Endothelial cell of umbilical vein (primary cell): ENCODE measurements at regions of chr18 and their contacts with region 1.

Region 1: GRCh38 chr18:3771121-3771971 is 321.4 kb downstream of the TGIF1 start:
- DNase-seq: peak; percentile 93
- H3K4me3 ChIP-seq: peak overlapping the region in 2 of 3 experiments; percentile 35 to 53
- H3K27ac ChIP-seq: peak overlapping the region; percentile 37
- H3K4me1 ChIP-seq: peaks cover 40% of the 10 kb centered on the region
- H3K27me3 ChIP-seq: no peaks in the 10 kb centered on the region
- CTCF ChIP-seq: peak; percentile 93 to 94
- POLR2A ChIP-seq: no peak

Region 2: DNA sequence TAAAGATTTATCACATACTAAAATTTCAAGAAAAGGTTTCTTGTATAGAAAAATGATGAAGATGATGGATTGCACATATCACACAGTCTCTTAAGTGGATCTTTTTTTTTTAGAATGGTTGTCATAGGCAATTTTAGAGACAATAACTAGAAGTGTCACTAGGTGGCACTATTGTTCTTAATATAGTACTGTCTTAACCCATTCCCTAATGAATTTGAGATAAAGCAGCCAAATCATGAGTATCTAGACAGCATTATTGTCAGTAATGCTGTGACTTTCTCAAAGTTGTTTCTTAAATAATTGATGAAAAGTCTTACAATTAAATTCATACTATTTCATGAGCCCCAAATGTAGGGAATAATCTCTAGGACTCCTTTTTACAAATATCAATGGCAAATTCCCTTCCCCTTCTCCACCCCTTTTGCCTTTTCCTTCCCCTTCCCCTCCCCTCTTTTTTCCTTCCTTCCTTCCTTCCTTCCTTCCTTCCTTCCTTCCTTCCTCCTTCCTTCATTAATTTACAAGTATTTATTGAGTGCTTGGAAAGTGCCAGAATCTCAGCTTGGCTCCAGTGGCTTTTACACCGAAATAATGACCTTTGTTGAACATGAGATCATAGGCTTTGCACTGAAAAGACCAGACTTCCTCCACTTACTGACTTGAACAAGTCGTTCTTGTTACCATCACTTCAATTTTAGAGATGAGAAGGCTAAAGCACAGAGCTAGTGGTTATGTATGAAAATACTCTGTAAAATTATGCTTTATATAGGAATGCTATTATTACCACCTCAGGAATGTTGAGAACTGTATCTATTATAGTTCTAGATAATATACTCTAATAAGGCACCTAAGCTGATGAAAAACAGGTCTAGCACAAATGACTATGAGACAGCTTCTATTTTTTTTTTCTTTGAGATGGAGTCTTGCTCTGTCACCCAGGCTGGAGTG is 489.6 kb before region 1 on chr18:
- CTCF ChIA-PET with region 1: interaction called, 4 read pairs
- POLR2A ChIA-PET with region 1: no interaction called
- dilution Hi-C with region 1: no loop called
- intact Hi-C with region 1: loop called (anchors 1 kb)
- DNase-seq: peak; percentile 91
- H3K4me3 ChIP-seq: no peak overlapping the region
- H3K27ac ChIP-seq: peak overlapping the region; percentile 84
- H3K4me1 ChIP-seq: peaks cover 38% of the 10 kb centered on the region
- H3K27me3 ChIP-seq: no peaks in the 10 kb centered on the region
- CTCF ChIP-seq: peak; percentile 6 to 21
- POLR2A ChIP-seq: no peak

Region 3: DNA sequence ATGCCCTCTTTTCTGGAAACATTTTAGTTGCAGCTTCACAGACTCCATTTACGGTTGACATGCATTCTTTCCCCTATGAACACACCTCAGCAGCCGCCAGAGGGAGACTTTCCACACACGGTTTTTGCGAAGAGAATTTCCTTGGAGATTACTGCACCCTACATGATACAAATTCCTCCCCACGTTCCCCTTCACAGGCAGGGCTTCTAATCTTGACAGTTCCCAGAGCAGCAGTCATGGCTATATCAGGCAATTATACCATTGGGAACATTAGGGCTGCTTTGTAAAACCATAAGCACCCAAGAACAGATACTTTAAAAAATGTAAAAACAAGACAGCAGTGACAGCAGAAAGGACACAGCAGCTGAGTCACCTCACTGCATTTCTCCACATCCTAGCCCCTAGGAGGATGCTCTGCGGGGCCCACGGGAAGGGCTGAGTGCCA is 67.6 kb before region 1 on chr18:
- CTCF ChIA-PET with region 1: interaction called, 88 read pairs
- POLR2A ChIA-PET with region 1: no interaction called
- dilution Hi-C with region 1: no loop called
- intact Hi-C with region 1: loop called (anchors 1 kb)
- DNase-seq: peak; percentile 65
- H3K4me3 ChIP-seq: no peak overlapping the region
- H3K27ac ChIP-seq: no peak overlapping the region
- H3K4me1 ChIP-seq: peaks cover 2% of the 10 kb centered on the region
- H3K27me3 ChIP-seq: no peaks in the 10 kb centered on the region
- CTCF ChIP-seq: peak; percentile 65 to 70
- POLR2A ChIP-seq: no peak

Region 4: DNA sequence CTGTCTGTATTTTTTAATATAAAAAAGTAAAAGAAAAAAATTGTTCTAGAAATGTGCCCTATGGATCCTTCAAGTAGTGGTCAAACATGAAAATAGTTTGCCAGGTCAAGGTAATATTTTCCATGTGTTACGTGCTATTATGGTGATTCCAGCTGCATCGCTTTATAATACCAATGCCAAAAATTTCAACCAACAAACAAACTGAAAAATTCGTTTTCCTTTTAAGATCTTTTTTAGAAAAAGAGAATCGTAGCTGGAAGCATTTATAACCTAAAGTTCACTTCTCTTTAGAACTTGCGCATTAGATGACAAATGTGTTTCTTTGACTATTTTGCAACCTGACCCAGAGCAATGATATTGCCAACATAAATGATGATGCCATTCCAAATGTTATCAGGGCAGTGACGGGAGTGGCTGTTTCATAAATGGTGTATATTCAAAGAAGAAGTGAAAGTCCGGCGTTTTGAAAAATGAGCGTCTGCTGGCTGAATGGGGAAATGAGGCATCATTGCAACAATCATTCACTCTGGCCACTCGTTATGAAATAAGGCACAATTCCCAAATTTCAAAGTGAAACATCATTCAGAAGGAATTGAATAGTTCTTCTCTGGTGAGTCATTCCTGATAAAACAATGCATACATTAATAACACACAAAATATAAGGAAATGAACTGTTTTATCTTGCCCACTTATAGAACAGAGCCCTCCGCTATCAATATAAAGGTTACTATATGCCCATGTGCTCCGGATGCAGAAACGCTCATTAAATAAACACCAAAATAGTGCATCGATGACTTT is 24.0 kb before region 1 on chr18:
- CTCF ChIA-PET with region 1: interaction called, 6 read pairs
- POLR2A ChIA-PET with region 1: interaction called, 5 read pairs
- dilution Hi-C with region 1: no loop called
- intact Hi-C with region 1: loop called (anchors 1 kb)
- DNase-seq: peak; percentile 90
- H3K4me3 ChIP-seq: peak overlapping the region in 2 of 3 experiments; percentile 4 to 44
- H3K27ac ChIP-seq: peak overlapping the region; percentile 87
- H3K4me1 ChIP-seq: peaks cover 25% of the 10 kb centered on the region
- H3K27me3 ChIP-seq: no peaks in the 10 kb centered on the region
- CTCF ChIP-seq: no peak
- POLR2A ChIP-seq: no peak

Region 5: GRCh38 chr18:3789525-3789924 is 18.2 kb after region 1 on chr18:
- CTCF ChIA-PET with region 1: interaction called, 84 read pairs
- POLR2A ChIA-PET with region 1: interaction called, 8 read pairs
- dilution Hi-C with region 1: no loop called
- intact Hi-C with region 1: loop called (anchors 1 kb)
- DNase-seq: no peak
- H3K4me3 ChIP-seq: no peak overlapping the region
- H3K27ac ChIP-seq: no peak overlapping the region
- H3K4me1 ChIP-seq: peaks cover 25% of the 10 kb centered on the region
- H3K27me3 ChIP-seq: no peaks in the 10 kb centered on the region
- CTCF ChIP-seq: no peak
- POLR2A ChIP-seq: no peak

Region 6: GRCh38 chr18:3816610-3817363 is 45.4 kb after region 1 on chr18:
- CTCF ChIA-PET with region 1: interaction called, 12 read pairs
- POLR2A ChIA-PET with region 1: no interaction called
- dilution Hi-C with region 1: no loop called
- intact Hi-C with region 1: no loop called
- DNase-seq: peak; percentile 64
- H3K4me3 ChIP-seq: no peak overlapping the region
- H3K27ac ChIP-seq: no peak overlapping the region
- H3K4me1 ChIP-seq: peaks cover 6% of the 10 kb centered on the region
- H3K27me3 ChIP-seq: no peaks in the 10 kb centered on the region
- CTCF ChIP-seq: no peak
- POLR2A ChIP-seq: no peak

Region 7: GRCh38 chr18:3995476-3996102 is 224.2 kb after region 1 on chr18:
- CTCF ChIA-PET with region 1: interaction called, 64 read pairs
- POLR2A ChIA-PET with region 1: no interaction called
- dilution Hi-C with region 1: no loop called
- intact Hi-C with region 1: loop called (anchors 1 kb)
- DNase-seq: peak; percentile 78
- H3K4me3 ChIP-seq: no peak overlapping the region
- H3K27ac ChIP-seq: no peak overlapping the region
- H3K4me1 ChIP-seq: no peaks in the 10 kb centered on the region
- H3K27me3 ChIP-seq: no peaks in the 10 kb centered on the region
- CTCF ChIP-seq: peak; percentile 75 to 85
- POLR2A ChIP-seq: no peak